Activated naive CD8-positive, alpha-beta T cell treated with anti-CD3 and anti-CD28 coated beads, Interleukin-2, amount 10 ng/mL, durations not matched to agents 7 days and 5 days (primary cell): ENCODE measurements at regions of chr5 and their contacts with region 1.

Region 1: DNA sequence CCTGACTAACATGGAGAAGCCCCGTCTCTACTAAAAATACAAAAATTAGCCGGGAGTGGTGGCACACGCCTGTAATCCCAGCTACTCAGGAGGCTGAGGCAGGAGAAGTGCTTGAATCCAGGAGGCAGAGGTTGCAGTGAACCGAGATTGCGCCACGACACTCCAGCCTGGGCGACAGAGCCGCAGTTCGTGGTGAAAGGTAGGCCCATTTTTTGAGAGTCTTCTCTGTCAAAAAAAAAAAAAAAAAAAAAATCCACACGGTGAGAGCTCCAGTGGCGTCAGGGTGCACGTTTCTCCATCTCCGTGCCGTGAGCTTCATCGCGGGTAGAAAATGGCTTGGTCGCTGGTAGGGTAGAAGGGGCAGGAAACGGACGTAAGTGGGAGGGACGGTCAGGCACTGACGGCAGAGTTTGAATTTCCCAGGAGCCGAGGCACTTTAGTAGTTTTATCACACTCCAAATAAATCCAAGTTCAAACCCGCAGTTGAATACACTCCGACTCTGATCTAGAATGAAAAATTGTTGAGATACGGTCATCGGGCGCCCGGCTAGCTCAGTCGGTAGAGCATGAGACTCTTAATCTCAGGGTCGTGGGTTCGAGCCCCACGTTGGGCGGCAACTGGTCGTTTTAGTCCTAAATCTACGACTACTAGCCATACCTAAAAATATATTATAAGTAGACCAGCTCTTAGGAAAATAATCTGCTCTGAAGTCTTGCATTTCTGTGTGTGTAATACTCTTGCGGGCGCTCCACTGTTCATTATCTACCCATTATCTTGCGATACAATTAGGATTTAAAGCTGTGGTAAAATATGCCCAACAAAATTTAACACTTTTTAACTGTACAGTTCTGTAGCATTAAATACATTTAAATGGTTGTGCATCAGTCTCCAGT is 2.5 kb upstream of the TRIM7 start:
- DNase-seq: peak; percentile 77
- ATAC-seq: peak; percentile 58
- H3K4me3 Mint-ChIP-seq: peak overlapping the region; percentile 86
- H3K27ac Mint-ChIP-seq: peak overlapping the region; percentile 87
- H3K4me1 Mint-ChIP-seq: peaks cover 29% of the 10 kb centered on the region
- H3K27me3 Mint-ChIP-seq: peaks cover 27% of the 10 kb centered on the region

Region 2: DNA sequence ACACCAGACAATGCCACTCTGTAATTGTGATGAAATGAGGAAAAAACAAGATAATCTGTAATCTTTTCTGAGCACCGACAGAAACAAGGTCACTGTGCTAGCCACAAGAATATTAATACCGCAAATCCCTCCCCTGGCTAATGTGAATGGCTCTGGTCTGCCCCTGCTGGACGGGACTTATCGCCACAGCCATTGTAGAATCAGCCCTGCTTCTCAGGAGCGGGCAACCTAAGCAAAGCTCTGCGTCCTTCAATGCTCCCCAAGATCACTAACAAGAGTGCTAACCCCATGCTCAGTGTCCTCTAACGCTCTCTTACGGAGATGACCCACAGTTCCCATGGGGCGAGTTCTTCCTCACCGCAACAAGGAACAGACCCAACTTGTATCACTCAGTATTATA is 119.2 kb before region 1 on chr5:
- POLR2A ChIA-PET with region 1: no interaction called
- DNase-seq: no peak
- ATAC-seq: no peak
- H3K4me3 Mint-ChIP-seq: no peak overlapping the region
- H3K27ac Mint-ChIP-seq: no peak overlapping the region
- H3K4me1 Mint-ChIP-seq: no peaks in the 10 kb centered on the region
- H3K27me3 Mint-ChIP-seq: peaks cover 28% of the 10 kb centered on the region

Region 3: GRCh38 chr5:181173420-181174342 is 33.8 kb before region 1 on chr5:
- POLR2A ChIA-PET with region 1: interaction called, 11 read pairs
- DNase-seq: peak; percentile 70
- ATAC-seq: peak; percentile 82
- H3K4me3 Mint-ChIP-seq: peak overlapping the region; percentile 97
- H3K27ac Mint-ChIP-seq: peak overlapping the region; percentile 98
- H3K4me1 Mint-ChIP-seq: peaks cover 38% of the 10 kb centered on the region
- H3K27me3 Mint-ChIP-seq: peaks cover 18% of the 10 kb centered on the region